SK-MEL-5 (cell line): ENCODE measurements at regions of chr7 and their contacts with region 1.

Region 1: GRCh38 chr7:106153891-106154449 is 41.9 kb upstream of the SYPL1 start:
- DNase-seq: peak; percentile 87

Region 2: GRCh38 chr7:105652359-105652993 is 501.5 kb before region 1 on chr7:
- in situ Hi-C with region 1: loop called (anchors 25 kb)
- DNase-seq: peak; percentile 87

Region 3: DNA sequence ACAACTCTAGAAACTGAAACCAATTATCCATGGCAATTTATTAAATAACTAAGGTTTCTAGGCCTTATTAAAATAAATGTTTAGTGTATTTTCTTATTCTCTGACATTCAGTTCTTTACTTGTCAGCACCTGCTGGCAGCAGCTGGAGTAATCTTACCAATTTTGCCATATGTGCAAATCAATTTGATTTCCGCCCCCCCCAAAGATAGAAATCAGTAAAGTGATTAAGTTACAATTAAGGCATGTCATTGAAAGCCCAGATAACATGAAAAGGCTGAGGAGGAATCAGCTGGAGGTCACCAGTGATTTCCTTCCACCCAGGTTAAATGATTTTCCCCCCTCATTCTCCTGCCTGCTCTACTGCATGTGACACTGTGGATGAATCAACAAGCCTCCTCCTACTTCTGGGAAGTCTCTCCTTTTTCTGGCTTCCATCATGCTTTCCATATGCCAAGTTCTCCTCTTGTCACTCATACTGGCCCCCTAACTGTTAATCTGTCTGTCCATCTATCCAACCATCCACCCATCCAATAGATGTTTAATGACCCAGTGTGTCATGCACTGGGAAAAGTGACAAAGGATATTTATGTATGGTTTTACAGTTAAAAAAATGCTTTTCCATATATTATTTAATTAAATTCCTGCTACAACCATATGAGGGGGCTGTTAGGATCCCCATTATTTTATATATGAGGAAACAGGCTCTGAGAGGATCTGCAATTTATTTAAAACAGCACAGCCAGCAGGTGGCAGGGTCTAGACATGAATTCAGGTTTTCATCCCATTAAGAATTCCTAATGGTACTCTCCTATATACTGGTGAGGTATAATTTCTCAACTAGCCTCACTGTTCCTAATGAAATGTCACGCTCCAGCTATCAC is 394.1 kb before region 1 on chr7:
- in situ Hi-C with region 1: loop called (anchors 25 kb)
- DNase-seq: peak; percentile 76

Region 4: DNA sequence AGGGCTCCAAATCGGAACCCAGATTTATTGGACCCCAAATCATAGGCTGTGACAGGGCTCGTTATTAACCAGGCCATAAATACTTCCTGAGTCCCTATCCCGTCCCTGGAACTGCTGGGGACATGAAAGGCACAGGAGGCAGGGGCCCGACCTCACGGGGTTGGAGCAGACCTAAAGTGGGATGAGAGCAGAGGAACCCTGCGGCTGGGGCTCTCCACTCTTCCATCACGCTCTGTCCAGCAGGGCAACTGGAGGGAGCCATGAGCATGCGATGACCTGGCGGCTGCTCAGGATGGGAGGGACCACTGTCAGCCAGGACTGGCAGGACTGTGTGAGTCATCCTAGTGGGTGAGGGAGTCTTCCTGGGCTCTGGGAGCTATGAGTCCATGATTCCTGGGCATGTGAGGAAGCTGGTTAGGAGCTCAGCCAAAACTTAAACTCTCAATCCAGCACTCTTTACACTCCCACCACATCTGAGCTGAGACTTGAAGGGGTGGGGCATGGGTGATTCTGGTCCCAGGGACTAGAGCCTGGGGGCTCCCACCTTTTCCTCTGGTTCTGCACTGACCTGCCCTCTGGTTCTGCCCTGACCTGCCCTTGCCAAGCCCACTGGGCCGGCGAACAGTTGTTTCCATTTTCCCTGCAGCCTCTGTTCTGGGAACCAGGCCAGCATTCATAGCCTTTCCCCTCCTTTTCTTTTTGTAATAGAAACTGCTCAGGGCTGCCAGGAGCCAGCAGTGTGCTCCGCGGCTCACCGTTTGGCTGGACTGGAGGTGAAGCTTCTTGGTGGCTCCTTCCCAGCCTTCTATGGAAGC is 89.0 kb before region 1 on chr7:
- in situ Hi-C with region 1: loop called (anchors 10 kb)
- DNase-seq: peak; percentile 75

Region 5: GRCh38 chr7:106089647-106090046 is 64.3 kb before region 1 on chr7:
- in situ Hi-C with region 1: no loop called
- DNase-seq: no peak